CD4-positive, alpha-beta memory T cell (primary cell): ENCODE measurements at regions of chr17 and their contacts with region 1.

Region 1: GRCh38 chr17:41688699-41689496 is at the start of gene EIF1:
- DNase-seq: peak; percentile 99 to 100 (median 99)
- H3K4me3 ChIP-seq: peak within 1 kb of the TSS; percentile 89 to 95
- H3K4me3 Mint-ChIP-seq: peak within 1 kb of the TSS; percentile 95 to 98 (median 96)
- H3K27ac ChIP-seq: peak within 1 kb of the TSS; percentile 99
- H3K27ac Mint-ChIP-seq: peak within 1 kb of the TSS; percentile 99 to 100 (median 100)
- H3K4me1 ChIP-seq: peaks cover 36% of the 10 kb centered on the region
- H3K4me1 Mint-ChIP-seq: peaks cover 19 to 60% (median 31%) of the 10 kb centered on the region in 4 donors
- H3K27me3 ChIP-seq: no peaks in the 10 kb centered on the region
- H3K27me3 Mint-ChIP-seq: no peaks in the 10 kb centered on the region
- total RNA-seq, gene EIF1: 776 to 839 TPM

Region 2: DNA sequence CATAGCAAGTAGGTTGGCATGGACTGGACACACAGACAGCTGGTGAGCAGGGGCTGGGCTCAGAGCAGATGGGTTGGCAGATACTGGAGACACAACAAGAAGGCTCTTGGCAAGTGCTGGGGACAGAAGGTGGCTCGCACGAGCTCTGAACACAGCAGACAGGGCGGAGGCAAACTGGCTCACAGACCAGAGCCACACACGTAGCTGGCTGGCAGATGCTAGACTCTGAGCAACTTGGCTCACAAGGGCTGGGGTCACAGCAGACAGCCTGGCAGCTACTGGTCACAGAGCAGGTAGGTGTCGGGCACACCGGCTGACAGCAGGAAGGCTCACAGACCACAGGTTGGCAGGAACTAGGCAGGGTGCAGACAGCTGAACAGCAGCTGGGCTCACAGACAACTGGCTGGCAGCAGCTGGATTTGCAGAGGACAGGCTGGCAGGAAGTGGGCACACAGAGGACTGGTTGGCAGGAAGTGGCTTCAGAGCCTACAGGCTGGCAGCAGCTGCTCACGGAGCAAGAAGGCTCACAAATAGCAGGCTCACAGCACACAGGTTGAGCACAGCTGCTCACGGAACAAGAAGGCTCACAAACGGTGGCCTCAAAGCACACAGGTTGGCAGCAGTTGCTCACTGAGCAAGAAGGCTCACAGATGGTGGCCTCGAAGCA is 380.5 kb before region 1 on chr17:
- CTCF ChIA-PET with region 1: interaction called, 3 read pairs
- POLR2A ChIA-PET with region 1: interaction called, 36 read pairs
- intact Hi-C with region 1: no loop called
- DNase-seq: peak; percentile 88 to 95 (median 92)
- H3K4me3 ChIP-seq: peak overlapping the region in 1 of 2 donors; percentile 41
- H3K4me3 Mint-ChIP-seq: peak overlapping the region; percentile 65 to 82 (median 78)
- H3K27ac ChIP-seq: peak overlapping the region; percentile 62
- H3K27ac Mint-ChIP-seq: peak overlapping the region; percentile 96 to 98 (median 97)
- H3K4me1 ChIP-seq: peaks cover 59% of the 10 kb centered on the region
- H3K4me1 Mint-ChIP-seq: peaks cover 54 to 63% (median 58%) of the 10 kb centered on the region in 4 donors
- H3K27me3 ChIP-seq: no peaks in the 10 kb centered on the region
- H3K27me3 Mint-ChIP-seq: no peaks in the 10 kb centered on the region

Region 3: DNA sequence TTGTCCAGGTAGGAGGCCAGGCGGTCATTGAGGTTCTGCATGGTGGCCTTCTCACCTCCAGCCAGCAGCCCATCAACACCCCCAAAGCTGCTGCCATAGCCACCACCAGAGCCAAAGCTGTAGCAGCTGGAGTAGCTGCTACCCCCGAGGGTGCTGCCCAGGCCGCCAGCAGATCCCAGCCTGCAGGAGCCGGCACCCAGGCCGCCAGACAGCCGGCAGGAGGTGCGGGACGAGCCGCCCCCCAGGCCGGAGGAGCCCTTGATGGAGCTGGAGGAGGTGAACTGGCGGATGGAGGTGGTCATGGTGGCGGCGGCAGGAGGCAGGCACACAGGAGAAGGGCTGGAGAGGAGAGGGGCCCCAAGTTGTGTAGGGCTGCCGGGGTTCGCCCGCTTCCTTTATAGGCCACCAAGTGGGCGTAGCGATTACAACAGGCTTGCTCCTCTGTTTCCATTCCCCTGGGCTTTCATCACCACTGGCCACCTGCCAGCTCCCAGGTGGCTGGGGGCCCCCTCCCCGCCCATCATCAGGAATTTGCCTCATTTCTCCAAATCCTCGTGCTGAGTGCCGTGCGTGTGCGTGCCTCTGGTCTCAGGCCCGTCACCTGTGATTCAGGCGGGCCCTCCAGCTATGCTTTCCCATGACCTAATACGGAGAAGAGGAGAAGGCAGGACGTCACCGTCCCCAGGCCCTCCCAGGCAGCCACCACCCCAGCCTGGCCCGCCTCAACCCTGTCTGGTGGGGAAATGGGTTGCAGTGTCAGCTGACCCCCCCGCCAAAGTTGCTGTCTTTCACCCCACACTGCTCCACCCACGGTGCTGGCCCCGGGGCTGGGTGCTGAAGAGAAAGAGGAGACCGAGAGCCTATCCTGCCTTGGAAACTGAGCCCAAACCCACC is 64.4 kb before region 1 on chr17 and contains the start of gene KRT17:
- CTCF ChIA-PET with region 1: no interaction called
- POLR2A ChIA-PET with region 1: no interaction called
- intact Hi-C with region 1: no loop called
- DNase-seq: no peak
- H3K4me3 ChIP-seq: no peak within 1 kb of the TSS
- H3K4me3 Mint-ChIP-seq: no peak within 1 kb of the TSS
- H3K27ac ChIP-seq: no peak within 1 kb of the TSS
- H3K27ac Mint-ChIP-seq: no peak within 1 kb of the TSS
- H3K4me1 ChIP-seq: no peaks in the 10 kb centered on the region
- H3K4me1 Mint-ChIP-seq: no peaks in the 10 kb centered on the region
- H3K27me3 ChIP-seq: no peaks in the 10 kb centered on the region
- H3K27me3 Mint-ChIP-seq: peaks cover 1 to 18% of the 10 kb centered on the region in 2 donors
- total RNA-seq, gene KRT17: not detected

Region 4: GRCh38 chr17:41648411-41649195 is 40.3 kb before region 1 on chr17:
- CTCF ChIA-PET with region 1: interaction called, 7 read pairs
- POLR2A ChIA-PET with region 1: interaction called, 16 read pairs
- intact Hi-C with region 1: no loop called
- DNase-seq: peak; percentile 75 to 84 (median 81)
- H3K4me3 ChIP-seq: peak overlapping the region; percentile 50 to 76
- H3K4me3 Mint-ChIP-seq: peak overlapping the region; percentile 74 to 91 (median 82)
- H3K27ac ChIP-seq: peak overlapping the region; percentile 49
- H3K27ac Mint-ChIP-seq: peak overlapping the region in 6 of 7 donors; percentile 64 to 92 (median 86)
- H3K4me1 ChIP-seq: peaks cover 13% of the 10 kb centered on the region
- H3K4me1 Mint-ChIP-seq: peaks cover 2 to 11% (median 8%) of the 10 kb centered on the region in 4 donors
- H3K27me3 ChIP-seq: no peaks in the 10 kb centered on the region
- H3K27me3 Mint-ChIP-seq: peaks cover 0 to 2% of the 10 kb centered on the region in 2 donors

Region 5: DNA sequence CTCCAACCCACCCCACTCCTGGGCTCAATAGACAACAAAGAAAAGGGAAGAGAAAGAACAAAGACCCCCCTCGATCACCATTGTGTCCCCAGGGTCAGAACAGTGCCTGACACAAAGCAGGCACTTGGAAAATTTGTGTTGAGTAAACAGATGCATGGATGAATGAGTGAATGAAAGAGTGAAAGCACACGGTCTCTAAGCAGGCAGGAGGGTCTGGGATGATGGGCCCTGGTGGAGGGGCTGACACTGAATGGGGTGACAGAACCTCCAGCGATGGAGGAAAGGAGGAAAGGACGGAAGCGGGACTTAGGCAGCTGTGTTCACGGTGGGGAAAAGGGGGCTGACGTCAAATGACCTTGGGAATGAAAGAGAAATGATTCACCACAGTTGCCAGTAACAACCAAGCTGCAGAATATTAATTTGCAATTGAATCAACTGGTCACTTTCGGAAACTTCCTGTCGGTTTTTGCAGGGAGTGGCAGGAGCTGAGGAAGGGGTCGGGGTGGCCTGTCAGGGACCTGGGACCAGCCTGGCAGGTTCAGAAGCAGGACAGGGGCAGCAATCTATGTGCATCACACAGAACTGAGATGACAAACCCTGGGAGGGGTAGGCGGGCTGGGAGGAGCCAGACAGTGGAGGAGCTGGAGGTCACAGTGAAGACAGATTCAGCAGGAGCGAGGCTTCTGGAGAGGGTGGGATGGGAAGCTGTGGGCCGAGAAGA is 16.5 kb after region 1 on chr17:
- CTCF ChIA-PET with region 1: interaction called, 4 read pairs
- POLR2A ChIA-PET with region 1: interaction called, 27 read pairs
- intact Hi-C with region 1: no loop called
- DNase-seq: no peak
- H3K4me3 ChIP-seq: no peak overlapping the region
- H3K4me3 Mint-ChIP-seq: no peak overlapping the region
- H3K27ac ChIP-seq: no peak overlapping the region
- H3K27ac Mint-ChIP-seq: peak overlapping the region in 1 of 7 donors; percentile 20
- H3K4me1 ChIP-seq: peaks cover 6% of the 10 kb centered on the region
- H3K4me1 Mint-ChIP-seq: peaks cover 0 to 3% (median 0%) of the 10 kb centered on the region in 4 donors
- H3K27me3 ChIP-seq: no peaks in the 10 kb centered on the region
- H3K27me3 Mint-ChIP-seq: peaks cover 3 to 5% of the 10 kb centered on the region in 2 donors

Region 6: GRCh38 chr17:41864836-41865595 is 176.1 kb after region 1 on chr17 and contains the start of gene KLHL11:
- CTCF ChIA-PET with region 1: no interaction called
- POLR2A ChIA-PET with region 1: interaction called, 11 read pairs
- intact Hi-C with region 1: no loop called
- DNase-seq: peak; percentile 85 to 88 (median 87)
- H3K4me3 ChIP-seq: peak within 1 kb of the TSS; percentile 26 to 78
- H3K4me3 Mint-ChIP-seq: peak within 1 kb of the TSS in 1 of 8 donors; percentile 82
- H3K27ac ChIP-seq: peak within 1 kb of the TSS; percentile 71
- H3K27ac Mint-ChIP-seq: peak within 1 kb of the TSS in 3 of 7 donors; percentile 89 to 93 (median 92)
- H3K4me1 ChIP-seq: peaks cover 42% of the 10 kb centered on the region
- H3K4me1 Mint-ChIP-seq: peaks cover 11 to 37% (median 19%) of the 10 kb centered on the region in 4 donors
- H3K27me3 ChIP-seq: no peaks in the 10 kb centered on the region
- H3K27me3 Mint-ChIP-seq: no peaks in the 10 kb centered on the region
- total RNA-seq, gene KLHL11: 20.6 to 20.8 TPM